ENCODE measurements at regions of chr3 and their contacts with region 1.

Region 1: GRCh38 chr3:111691293-111691909 is 96.3 kb upstream of the ZBED2 start:
- DNase-seq: no peak
- H3K4me3 ChIP-seq: no peak overlapping the region
- H3K27ac ChIP-seq: no peak overlapping the region
- H3K4me1 ChIP-seq: no peaks in the 10 kb centered on the region; a peak in 1 of 7 replicates
- H3K27me3 ChIP-seq: peaks cover 0 to 1% (median 0%) of the 10 kb centered on the region in 4 experiments; a peak in 1 of 7 replicates
- CTCF ChIP-seq: peak in 2 of 3 experiments; percentile 40 to 56; a peak in 3 of 4 replicates
- EP300 ChIP-seq: no peak
- POLR2A ChIP-seq: no peak
- RAD21 ChIP-seq: peak; percentile 66 to 75

Region 2: DNA sequence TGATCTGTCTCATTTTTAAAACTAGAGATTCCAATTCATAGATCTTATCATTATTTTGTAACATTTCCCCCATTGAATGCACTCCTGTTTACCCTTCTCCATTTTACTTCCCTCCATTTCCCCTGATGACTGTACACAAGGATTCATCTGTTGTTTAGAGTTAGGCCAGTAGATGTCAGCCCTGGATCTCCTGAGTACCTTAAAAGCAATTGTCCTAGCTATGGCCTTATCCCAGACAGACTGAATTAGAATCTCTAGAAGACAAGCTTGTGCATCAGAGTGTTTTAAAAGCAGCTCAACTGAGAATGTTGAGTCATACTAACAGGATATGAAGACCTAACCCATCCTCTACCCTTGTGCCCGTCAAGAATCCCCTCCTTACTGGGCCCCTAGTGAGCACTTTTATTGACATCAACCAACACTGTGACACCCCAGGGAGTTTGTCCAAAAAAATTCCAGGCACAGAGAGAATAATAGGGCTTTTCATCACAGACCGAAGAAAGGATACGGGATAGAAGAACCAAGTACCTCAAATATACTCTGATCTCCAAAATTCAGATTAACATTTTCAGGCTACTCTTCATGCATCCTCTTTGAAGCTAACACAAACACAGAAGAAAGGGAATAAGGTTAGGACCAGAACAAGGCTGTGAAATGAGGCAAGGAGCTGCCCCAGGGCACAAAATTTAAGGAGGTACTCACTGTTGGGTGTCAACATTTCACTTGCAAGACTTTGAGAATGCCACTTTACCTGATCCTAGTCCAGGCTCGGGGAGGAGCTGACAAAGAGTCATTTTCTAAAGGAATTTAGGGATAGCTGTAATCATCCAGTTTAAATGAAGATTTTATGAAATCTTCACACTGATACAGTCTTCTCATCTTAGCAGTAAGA is 113.4 kb before region 1 on chr3:
- CTCF ChIA-PET with region 1: interaction called, 27 read pairs
- POLR2A ChIA-PET with region 1: no interaction called
- DNase-seq: no peak
- H3K4me3 ChIP-seq: no peak overlapping the region
- H3K27ac ChIP-seq: no peak overlapping the region
- H3K4me1 ChIP-seq: no peaks in the 10 kb centered on the region
- H3K27me3 ChIP-seq: no peaks in the 10 kb centered on the region
- CTCF ChIP-seq: peak in 2 of 3 experiments; percentile 44 to 51; a peak in 2 of 4 replicates
- EP300 ChIP-seq: no peak
- POLR2A ChIP-seq: no peak
- RAD21 ChIP-seq: peak; percentile 69 to 74

Region 3: GRCh38 chr3:111621535-111621934 is 69.9 kb before region 1 on chr3:
- CTCF ChIA-PET with region 1: interaction called, 10 read pairs
- POLR2A ChIA-PET with region 1: no interaction called
- DNase-seq: peak; percentile 59 to 86
- H3K4me3 ChIP-seq: no peak overlapping the region
- H3K27ac ChIP-seq: no peak overlapping the region
- H3K4me1 ChIP-seq: no peaks in the 10 kb centered on the region
- H3K27me3 ChIP-seq: no peaks in the 10 kb centered on the region
- CTCF ChIP-seq: peak; percentile 84 to 97 (median 92)
- EP300 ChIP-seq: no peak
- POLR2A ChIP-seq: no peak
- RAD21 ChIP-seq: peak; percentile 70 to 74

Region 4: DNA sequence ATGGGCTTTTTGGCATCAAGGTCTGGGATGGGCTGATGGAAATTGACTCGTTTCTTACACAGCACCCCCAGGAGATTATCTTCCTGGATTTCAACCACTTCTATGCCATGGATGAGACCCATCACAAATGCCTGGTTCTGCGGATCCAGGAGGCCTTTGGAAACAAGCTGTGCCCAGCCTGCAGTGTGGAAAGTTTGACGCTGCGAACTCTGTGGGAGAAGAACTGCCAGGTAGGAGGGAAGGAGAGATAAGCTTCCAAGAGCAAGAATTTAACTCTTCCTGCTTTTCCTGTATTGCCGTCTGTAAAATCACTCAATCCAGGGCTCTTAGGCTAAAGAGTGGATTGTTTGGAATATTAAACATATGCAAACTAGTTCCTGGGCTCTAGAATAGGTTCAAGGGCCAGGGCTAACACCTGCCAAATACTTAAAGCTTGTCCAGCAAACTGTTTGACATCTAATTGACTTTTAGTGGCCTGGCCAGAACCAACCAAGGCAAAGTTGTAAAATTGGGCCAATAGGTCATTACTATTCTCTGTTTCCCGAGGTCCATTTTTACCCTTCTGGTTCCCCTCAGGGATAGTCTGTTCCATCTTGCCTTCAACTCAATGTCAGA is 16.9 kb after region 1 on chr3:
- CTCF ChIA-PET with region 1: interaction called, 10 read pairs
- POLR2A ChIA-PET with region 1: no interaction called
- DNase-seq: no peak
- H3K4me3 ChIP-seq: no peak overlapping the region
- H3K27ac ChIP-seq: no peak overlapping the region
- H3K4me1 ChIP-seq: no peaks in the 10 kb centered on the region
- H3K27me3 ChIP-seq: no peaks in the 10 kb centered on the region
- CTCF ChIP-seq: no peak
- EP300 ChIP-seq: no peak
- POLR2A ChIP-seq: no peak
- RAD21 ChIP-seq: no peak